HCT116 (cell line): ENCODE measurements at regions of chr1 and their contacts with region 1.

Region 1: GRCh38 chr1:154558575-154559465 is at the start of gene UBE2Q1:
- DNase-seq: peak; percentile 96
- ATAC-seq: peak; percentile 93
- H3K4me3 ChIP-seq: peak within 1 kb of the TSS; percentile 81 to 85
- H3K27ac ChIP-seq: peak within 1 kb of the TSS; percentile 91
- H3K4me1 ChIP-seq: peaks cover 11 to 34% of the 10 kb centered on the region in 2 experiments
- H3K27me3 ChIP-seq: no peaks in the 10 kb centered on the region
- CTCF ChIP-seq: no peak
- POLR2A ChIP-seq: peak; percentile 18
- RAD21 ChIP-seq: no peak
- total RNA-seq, gene UBE2Q1: 70.9 TPM

Region 2: DNA sequence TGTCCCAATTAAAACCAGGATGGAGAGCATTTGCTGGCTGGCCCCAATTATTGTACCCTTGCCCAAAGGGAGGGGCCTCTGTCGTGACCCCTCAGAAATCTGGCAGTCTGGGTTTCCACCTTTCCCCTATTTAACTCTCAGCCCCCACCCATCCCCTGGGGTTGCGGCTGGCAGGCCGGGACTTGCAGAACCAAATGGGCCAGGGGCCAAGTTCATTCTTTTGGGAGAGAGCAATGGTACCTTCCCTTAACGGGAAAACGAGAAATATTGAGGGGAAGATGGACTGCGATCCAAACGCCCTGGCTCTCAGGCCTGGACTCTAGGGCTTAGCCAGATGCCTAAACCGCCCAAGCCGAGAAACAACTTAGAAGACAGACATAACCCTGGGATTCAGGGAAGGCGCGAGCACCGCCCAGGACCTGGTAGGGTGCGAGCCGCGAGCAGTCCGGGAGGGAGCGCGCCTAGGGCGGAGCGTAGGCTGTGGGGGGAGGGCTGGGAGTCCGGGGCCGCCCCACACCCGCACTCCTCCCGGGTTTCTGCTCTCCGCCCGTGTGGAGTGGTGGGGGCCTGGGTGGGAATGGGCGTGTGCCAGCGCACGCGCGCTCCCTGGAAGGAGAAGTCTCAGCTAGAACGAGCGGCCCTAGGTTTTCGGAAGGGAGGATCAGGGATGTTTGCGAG is 783.9 kb before region 1 on chr1 and contains the start of gene SLC27A3:
- CTCF ChIA-PET with region 1: no interaction called
- POLR2A ChIA-PET with region 1: no interaction called
- RAD21 ChIA-PET with region 1: no interaction called
- intact Hi-C with region 1: no loop called
- DNase-seq: peak; percentile 27
- ATAC-seq: peak; percentile 82
- H3K4me3 ChIP-seq: peak within 1 kb of the TSS; percentile 68 to 85
- H3K27ac ChIP-seq: peak within 1 kb of the TSS; percentile 96
- H3K4me1 ChIP-seq: peaks cover 14 to 26% of the 10 kb centered on the region in 2 experiments
- H3K27me3 ChIP-seq: no peaks in the 10 kb centered on the region
- CTCF ChIP-seq: no peak
- POLR2A ChIP-seq: peak; percentile 48
- RAD21 ChIP-seq: no peak
- total RNA-seq, gene SLC27A3: 14.3 TPM

Region 3: DNA sequence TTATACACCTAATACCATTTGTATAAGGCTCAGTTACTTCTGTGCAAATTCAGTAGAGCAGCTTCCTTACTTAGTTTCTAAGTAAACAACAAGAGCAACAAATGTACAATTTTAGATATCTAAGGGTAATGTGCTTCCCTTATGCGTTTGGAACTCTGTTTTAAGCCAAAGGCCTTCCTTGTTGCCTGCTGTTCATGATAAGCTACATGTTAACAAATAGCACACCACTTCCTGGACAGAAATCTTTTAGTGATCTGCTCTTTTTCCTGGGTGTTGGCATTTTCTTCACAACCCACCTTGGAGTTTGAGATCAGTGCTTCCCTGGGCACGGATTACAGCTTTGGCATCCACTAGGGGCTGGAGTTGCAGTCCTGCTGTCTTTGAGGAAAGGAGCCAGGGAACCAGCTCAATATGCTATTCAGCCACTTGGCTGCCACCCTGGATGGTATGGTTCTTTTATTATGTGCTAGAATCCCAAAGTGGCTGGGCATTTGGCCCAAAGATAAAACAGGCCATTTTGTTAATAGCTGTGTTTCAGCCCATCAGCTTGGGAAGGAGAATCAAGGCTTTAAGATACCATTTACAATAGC is 104.7 kb after region 1 on chr1:
- CTCF ChIA-PET with region 1: interaction called, 10 read pairs
- POLR2A ChIA-PET with region 1: no interaction called
- RAD21 ChIA-PET with region 1: no interaction called
- intact Hi-C with region 1: loop called (anchors 10 kb)
- DNase-seq: no peak
- ATAC-seq: peak; percentile 72
- H3K4me3 ChIP-seq: no peak overlapping the region
- H3K27ac ChIP-seq: no peak overlapping the region
- H3K4me1 ChIP-seq: no peaks in the 10 kb centered on the region
- H3K27me3 ChIP-seq: no peaks in the 10 kb centered on the region
- CTCF ChIP-seq: peak in 2 of 3 experiments; percentile 34 to 36; a peak in 3 of 6 replicates
- POLR2A ChIP-seq: no peak
- RAD21 ChIP-seq: no peak

Region 4: DNA sequence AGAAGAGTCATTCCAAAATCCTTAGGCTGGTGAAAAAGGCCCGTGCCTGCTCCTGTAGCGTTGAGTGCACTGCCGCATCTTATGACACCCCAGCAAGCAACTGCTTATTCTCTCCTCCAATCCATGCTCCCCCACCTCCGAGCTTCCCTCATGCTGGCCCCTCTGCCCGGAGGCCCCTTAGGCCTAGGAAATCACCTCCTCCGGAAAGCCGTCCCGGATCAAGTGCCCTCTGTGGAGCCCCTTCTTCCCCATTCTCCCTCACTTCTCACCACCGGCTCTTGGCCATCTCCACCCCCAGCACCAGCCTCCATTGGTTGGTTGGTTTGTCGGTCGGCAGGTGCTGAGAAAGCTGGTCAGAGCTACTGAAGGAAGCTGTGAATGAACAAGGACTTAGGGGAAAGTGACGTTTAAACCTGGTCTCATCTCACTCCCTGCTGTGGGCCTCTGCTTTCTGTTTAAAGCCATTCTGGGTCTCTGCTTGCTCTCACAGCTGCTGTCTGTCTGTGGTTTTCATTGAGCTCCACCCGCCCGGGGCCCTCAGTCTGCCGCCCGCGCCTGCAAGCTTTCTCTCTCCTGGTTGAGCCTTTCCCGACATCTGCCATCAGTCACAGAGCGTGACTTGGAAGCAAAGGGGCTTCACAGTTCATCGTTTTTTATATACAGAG is 189.1 kb after region 1 on chr1:
- CTCF ChIA-PET with region 1: interaction called, 3 read pairs
- POLR2A ChIA-PET with region 1: no interaction called
- RAD21 ChIA-PET with region 1: no interaction called
- intact Hi-C with region 1: loop called (anchors 2 kb)
- DNase-seq: no peak
- ATAC-seq: no peak
- H3K4me3 ChIP-seq: no peak overlapping the region
- H3K27ac ChIP-seq: no peak overlapping the region
- H3K4me1 ChIP-seq: peaks cover 0 to 8% of the 10 kb centered on the region in 2 experiments; a peak in 1 of 4 replicates
- H3K27me3 ChIP-seq: peaks cover 3% of the 10 kb centered on the region; the same call in 1 of the 2 replicates
- CTCF ChIP-seq: no peak
- POLR2A ChIP-seq: no peak
- RAD21 ChIP-seq: no peak

Region 5: DNA sequence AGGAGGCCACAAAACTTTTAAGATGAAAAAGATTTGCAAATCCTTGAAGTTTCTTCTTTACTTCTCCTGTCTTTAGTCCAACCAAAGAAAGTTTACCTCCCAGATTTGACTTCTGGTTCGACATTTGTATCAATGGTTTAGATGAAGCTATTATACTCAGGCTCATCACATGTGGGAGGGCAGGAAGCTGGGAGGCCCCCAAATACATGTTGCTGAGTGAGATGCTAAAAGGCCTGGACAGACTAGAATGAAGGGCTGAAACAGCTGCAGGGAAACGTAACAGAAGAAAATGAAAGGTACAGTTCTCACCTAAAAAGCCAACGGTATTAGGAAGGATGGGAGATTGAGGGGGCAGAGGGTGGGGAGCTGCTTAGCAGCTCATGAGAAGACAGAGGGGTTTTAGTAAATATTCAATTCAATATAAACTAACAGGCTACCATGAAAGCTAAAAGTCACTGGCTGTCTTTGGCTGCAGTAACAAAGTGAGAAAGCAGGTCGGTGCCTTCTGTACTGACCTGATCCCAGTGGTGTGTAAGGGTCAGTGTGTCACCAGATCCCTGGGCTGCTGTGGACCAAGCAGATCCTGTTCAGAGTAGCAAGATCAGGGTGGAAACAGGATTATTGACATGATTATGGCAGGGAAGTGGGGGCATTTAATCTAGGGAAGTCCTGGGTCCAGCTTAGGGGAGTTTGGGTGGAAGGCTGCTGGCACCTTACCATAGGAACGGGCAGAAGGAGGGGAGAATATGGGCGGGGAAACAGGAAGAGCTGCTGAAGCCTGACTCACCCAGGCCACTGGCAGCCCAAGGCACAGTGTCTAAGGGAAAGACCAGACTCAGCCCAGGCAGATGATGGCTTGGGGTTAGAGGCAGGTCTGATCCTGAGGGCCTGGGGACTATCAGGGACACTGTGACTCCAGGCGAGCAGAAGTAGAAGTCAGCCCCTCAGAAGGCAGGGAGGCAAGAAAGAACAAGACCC is 250.9 kb after region 1 on chr1:
- CTCF ChIA-PET with region 1: no interaction called
- POLR2A ChIA-PET with region 1: no interaction called
- RAD21 ChIA-PET with region 1: no interaction called
- intact Hi-C with region 1: no loop called
- DNase-seq: no peak
- ATAC-seq: peak; percentile 90
- H3K4me3 ChIP-seq: no peak overlapping the region
- H3K27ac ChIP-seq: no peak overlapping the region
- H3K4me1 ChIP-seq: peaks cover 19 to 28% of the 10 kb centered on the region in 2 experiments; a peak in 3 of 4 replicates
- H3K27me3 ChIP-seq: peaks cover 15% of the 10 kb centered on the region
- CTCF ChIP-seq: no peak
- POLR2A ChIP-seq: no peak
- RAD21 ChIP-seq: no peak

Region 6: GRCh38 chr1:154878371-154879022 is 319.7 kb after region 1 on chr1:
- CTCF ChIA-PET with region 1: interaction called, 22 read pairs
- POLR2A ChIA-PET with region 1: no interaction called
- RAD21 ChIA-PET with region 1: interaction called, 6 to 18 read pairs
- intact Hi-C with region 1: loop called (anchors 1 kb)
- DNase-seq: peak; percentile 66
- ATAC-seq: peak; percentile 100
- H3K4me3 ChIP-seq: no peak overlapping the region
- H3K27ac ChIP-seq: no peak overlapping the region
- H3K4me1 ChIP-seq: peaks cover 0 to 19% of the 10 kb centered on the region in 2 experiments; a peak in 3 of 4 replicates
- H3K27me3 ChIP-seq: no peaks in the 10 kb centered on the region
- CTCF ChIP-seq: peak; percentile 89
- POLR2A ChIP-seq: no peak
- RAD21 ChIP-seq: peak; percentile 96

Region 7: GRCh38 chr1:154943649-154944400 is 385.0 kb after region 1 on chr1:
- CTCF ChIA-PET with region 1: interaction called, 3 read pairs
- POLR2A ChIA-PET with region 1: no interaction called
- RAD21 ChIA-PET with region 1: no interaction called
- intact Hi-C with region 1: loop called (anchors 1 kb)
- DNase-seq: no peak
- ATAC-seq: peak; percentile 91
- H3K4me3 ChIP-seq: no peak overlapping the region
- H3K27ac ChIP-seq: no peak overlapping the region
- H3K4me1 ChIP-seq: peaks cover 2 to 12% of the 10 kb centered on the region in 2 experiments; a peak in 3 of 4 replicates
- H3K27me3 ChIP-seq: no peaks in the 10 kb centered on the region
- CTCF ChIP-seq: peak in 2 of 3 experiments; percentile 89 to 90; a peak in 4 of 6 replicates
- POLR2A ChIP-seq: no peak
- RAD21 ChIP-seq: no peak

Region 8: GRCh38 chr1:155063550-155064110 is 504.8 kb after region 1 on chr1 and contains the start of gene EFNA4:
- CTCF ChIA-PET with region 1: no interaction called
- POLR2A ChIA-PET with region 1: no interaction called
- RAD21 ChIA-PET with region 1: no interaction called
- intact Hi-C with region 1: loop called (anchors 5 kb)
- DNase-seq: peak; percentile 79
- ATAC-seq: peak; percentile 79
- H3K4me3 ChIP-seq: peak within 1 kb of the TSS; percentile 77 to 84
- H3K27ac ChIP-seq: peak within 1 kb of the TSS; percentile 93
- H3K4me1 ChIP-seq: peaks cover 21 to 35% of the 10 kb centered on the region in 2 experiments
- H3K27me3 ChIP-seq: no peaks in the 10 kb centered on the region
- CTCF ChIP-seq: no peak
- POLR2A ChIP-seq: peak; percentile 76
- RAD21 ChIP-seq: no peak
- total RNA-seq, gene EFNA4: 9.8 TPM